SK-N-SH (cell line): ENCODE measurements at regions of chr9 and their contacts with region 1.

Region 1: DNA sequence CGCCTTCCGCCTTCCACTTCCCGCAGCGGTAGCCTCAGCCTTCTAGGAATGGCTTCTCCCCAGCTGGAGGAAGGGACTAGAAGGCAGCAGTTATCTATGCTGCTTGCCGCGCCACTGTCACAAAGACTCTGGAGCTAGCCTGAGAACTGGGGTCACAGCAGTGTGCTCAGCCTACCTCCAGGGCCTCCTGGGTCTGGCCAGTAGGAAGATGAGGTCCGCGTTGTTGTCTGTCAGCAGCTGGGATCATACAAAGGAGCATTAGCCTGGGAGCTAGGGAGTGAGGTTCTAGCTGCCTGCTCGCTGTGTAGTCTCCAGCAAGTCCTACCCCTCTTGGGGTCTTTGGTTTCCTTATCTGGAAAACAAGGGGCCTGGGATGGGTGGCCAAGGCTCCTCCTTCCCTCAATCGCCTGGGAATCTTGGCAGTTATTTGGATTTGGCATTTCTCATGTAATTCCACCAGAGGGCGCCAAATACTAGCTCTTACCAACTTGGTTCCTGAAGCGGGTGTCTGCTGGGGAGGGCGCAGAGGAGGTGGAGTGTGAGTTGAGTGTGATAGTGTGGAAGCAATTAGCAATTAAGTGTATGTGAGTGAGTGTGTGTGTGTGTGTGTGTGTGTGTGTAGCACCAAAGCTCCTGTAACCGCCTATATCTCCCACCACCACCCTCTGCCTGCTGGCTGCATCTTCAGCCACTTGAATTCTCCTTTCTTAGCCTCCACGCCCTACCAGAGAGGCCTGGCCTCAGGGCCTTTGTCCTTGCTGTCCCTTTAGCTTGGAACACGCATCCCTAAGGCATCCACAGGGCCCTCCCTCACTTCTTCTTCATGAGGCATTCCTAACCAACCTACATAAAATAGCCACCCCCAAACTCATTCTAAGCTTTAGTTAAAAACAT is 97.1 kb downstream of the ENTREP1 start:
- DNase-seq: peak; percentile 81
- H3K4me3 ChIP-seq: no peak overlapping the region
- H3K27ac ChIP-seq: no peak overlapping the region
- H3K4me1 ChIP-seq: peaks cover 0 to 2% of the 10 kb centered on the region in 2 experiments; a peak in 1 of 4 replicates
- H3K27me3 ChIP-seq: no peaks in the 10 kb centered on the region
- CTCF ChIP-seq: peak; percentile 84
- EP300 ChIP-seq: no peak
- RAD21 ChIP-seq: peak; percentile 98

Region 2: DNA sequence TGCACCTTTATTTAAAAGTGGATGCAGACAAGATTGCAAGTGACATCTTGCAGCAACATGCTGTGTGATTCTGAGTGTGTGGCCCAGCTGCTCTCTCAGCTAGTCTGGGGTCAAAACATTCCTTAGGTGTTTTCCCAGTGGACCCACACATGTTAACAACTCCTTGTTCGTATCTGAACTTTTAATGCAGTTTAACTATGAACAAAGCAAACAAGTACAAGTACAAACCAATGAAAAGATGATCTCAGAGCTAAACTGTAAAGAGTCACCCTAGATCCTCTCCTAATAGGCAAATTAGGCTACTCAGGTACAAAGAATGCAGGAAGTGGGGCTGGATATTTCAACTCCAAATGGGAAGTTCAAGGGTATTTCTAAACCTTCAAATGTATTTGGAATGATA is 11.2 kb after region 1 on chr9:
- CTCF ChIA-PET with region 1: interaction called, 17 read pairs
- POLR2A ChIA-PET with region 1: no interaction called
- DNase-seq: no peak
- H3K4me3 ChIP-seq: no peak overlapping the region
- H3K27ac ChIP-seq: no peak overlapping the region
- H3K4me1 ChIP-seq: no peaks in the 10 kb centered on the region
- H3K27me3 ChIP-seq: no peaks in the 10 kb centered on the region
- CTCF ChIP-seq: no peak
- EP300 ChIP-seq: no peak
- RAD21 ChIP-seq: no peak

Region 3: GRCh38 chr9:69549310-69550202 is 127.4 kb after region 1 on chr9:
- CTCF ChIA-PET with region 1: interaction called, 157 read pairs
- POLR2A ChIA-PET with region 1: no interaction called
- DNase-seq: peak; percentile 44
- H3K4me3 ChIP-seq: no peak overlapping the region
- H3K27ac ChIP-seq: no peak overlapping the region
- H3K4me1 ChIP-seq: peaks cover 0 to 4% of the 10 kb centered on the region in 2 experiments; a peak in 2 of 4 replicates
- H3K27me3 ChIP-seq: no peaks in the 10 kb centered on the region
- CTCF ChIP-seq: peak; percentile 94
- EP300 ChIP-seq: no peak
- RAD21 ChIP-seq: peak; percentile 87

Region 4: DNA sequence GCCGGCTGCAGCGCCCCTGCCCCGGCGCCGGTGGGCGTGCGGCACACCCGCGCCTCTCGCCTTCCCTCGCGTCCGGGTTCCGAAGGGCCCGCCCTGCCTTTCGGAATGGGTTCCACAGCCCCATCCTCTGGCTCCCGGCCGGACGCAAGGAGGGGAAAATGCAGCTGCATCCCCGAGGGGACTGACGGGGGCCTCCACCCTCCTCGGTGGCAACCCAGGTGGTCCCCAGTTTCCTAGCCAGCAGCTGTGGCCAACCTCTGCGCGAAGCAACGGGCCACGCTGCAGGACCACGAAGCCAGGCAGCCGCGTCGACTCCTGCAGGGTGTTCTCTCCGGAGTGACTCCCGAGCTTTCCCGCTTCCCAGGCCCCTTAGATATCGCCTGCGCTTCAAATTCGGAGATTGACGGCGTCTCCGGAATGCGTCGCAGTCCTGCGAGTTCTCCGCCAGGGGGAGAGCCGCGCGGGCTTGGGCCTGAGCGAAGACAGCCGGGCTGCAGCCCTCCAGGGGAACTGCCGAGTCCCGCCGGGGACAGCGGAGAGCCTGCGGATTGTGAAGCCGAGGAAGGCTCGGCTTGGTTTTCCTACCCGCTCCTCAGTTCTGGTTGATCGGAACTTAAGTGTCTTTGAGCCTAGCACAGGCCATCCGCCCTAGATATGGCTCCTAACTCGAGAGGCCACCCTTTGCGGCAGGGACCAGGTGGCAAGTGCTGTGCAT is 250.6 kb after region 1 on chr9:
- CTCF ChIA-PET with region 1: interaction called, 24 read pairs
- POLR2A ChIA-PET with region 1: no interaction called
- DNase-seq: peak; percentile 86
- H3K4me3 ChIP-seq: peak overlapping the region; percentile 70 to 80
- H3K27ac ChIP-seq: peak overlapping the region; percentile 50 to 92
- H3K4me1 ChIP-seq: peaks cover 8 to 23% of the 10 kb centered on the region in 2 experiments; a peak in 3 of 4 replicates
- H3K27me3 ChIP-seq: no peaks in the 10 kb centered on the region
- CTCF ChIP-seq: peak; percentile 86
- EP300 ChIP-seq: no peak; a peak in 1 of 4 replicates
- RAD21 ChIP-seq: peak; percentile 71

Region 5: DNA sequence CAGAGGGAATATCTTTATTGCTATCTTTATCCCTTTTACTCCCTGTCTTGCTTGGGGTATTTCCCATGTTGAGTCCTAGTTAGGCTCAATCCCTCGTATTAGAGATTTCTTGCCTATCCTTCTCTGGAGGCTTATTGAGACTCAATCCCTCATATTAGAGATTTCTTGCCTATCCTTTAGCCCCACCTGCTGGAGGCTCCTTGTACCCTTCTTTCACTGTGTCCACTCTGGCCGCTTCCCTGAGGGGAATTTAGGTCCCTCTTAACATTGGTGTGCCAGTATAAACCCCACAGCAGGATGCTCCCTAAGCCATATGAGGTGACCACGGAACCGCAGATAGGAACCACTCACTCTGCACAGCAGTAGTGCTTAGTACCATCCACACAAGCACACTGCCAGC is 510.7 kb after region 1 on chr9:
- CTCF ChIA-PET with region 1: interaction called, 31 read pairs
- POLR2A ChIA-PET with region 1: no interaction called
- DNase-seq: no peak
- H3K4me3 ChIP-seq: no peak overlapping the region
- H3K27ac ChIP-seq: no peak overlapping the region
- H3K4me1 ChIP-seq: no peaks in the 10 kb centered on the region
- H3K27me3 ChIP-seq: no peaks in the 10 kb centered on the region
- CTCF ChIP-seq: peak; percentile 35
- EP300 ChIP-seq: no peak
- RAD21 ChIP-seq: peak; percentile 38; the same call in 1 of the 2 replicates